HEK293 (cell line): ENCODE measurements at regions of chr1 and their contacts with region 1.

Region 1: GRCh38 chr1:214328770-214329469 is 48.0 kb downstream of the SMYD2 start:
- H3K4me3 ChIP-seq: no peak overlapping the region
- H3K27ac ChIP-seq: no peak overlapping the region
- H3K4me1 ChIP-seq: no peaks in the 10 kb centered on the region
- CTCF ChIP-seq: peak; percentile 90

Region 2: GRCh38 chr1:214219902-214220301 is 109.0 kb before region 1 on chr1:
- CTCF ChIA-PET with region 1: interaction called, 186 read pairs
- POLR2A ChIA-PET with region 1: no interaction called
- H3K4me3 ChIP-seq: no peak overlapping the region
- H3K27ac ChIP-seq: no peak overlapping the region
- H3K4me1 ChIP-seq: no peaks in the 10 kb centered on the region
- CTCF ChIP-seq: no peak

Region 3: DNA sequence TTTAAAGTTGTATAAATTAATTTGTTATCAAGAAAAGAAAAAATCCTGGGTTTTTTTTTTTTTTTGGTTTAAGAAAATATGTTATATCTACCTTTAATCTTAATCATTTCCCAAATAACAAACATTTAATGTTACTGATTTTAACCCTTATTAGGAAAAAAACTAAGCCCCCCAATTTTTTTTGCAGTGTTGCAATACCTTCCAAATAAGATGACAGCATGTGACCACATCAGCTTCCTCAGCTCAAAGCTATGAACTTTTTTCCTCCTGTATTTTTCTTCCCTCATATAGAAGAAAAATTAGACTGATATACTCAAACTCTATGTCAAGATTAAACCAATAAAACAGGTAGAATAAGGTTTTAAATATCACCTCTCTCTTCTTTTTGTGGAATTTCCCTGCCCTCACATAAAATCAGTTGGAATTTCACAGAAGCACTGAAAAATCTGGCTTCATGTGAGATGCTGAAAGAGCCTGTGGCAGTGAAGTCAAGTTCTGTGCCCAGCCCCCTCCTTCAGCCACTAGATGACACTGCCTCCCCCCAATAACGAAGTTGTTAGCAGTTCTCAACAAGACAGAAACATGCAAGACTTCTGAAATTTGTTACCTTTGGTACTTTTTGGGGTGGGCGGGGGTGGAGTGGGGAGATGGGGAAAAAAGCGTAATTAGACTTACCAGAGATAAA is 57.6 kb before region 1 on chr1:
- CTCF ChIA-PET with region 1: interaction called, 25 read pairs
- POLR2A ChIA-PET with region 1: no interaction called
- H3K4me3 ChIP-seq: no peak overlapping the region
- H3K27ac ChIP-seq: no peak overlapping the region
- H3K4me1 ChIP-seq: peaks cover 5% of the 10 kb centered on the region; the same call in 1 of the 2 replicates
- CTCF ChIP-seq: peak; percentile 53

Region 4: GRCh38 chr1:214316593-214316992 is 12.3 kb before region 1 on chr1:
- CTCF ChIA-PET with region 1: interaction called, 45 read pairs
- POLR2A ChIA-PET with region 1: no interaction called
- H3K4me3 ChIP-seq: no peak overlapping the region
- H3K27ac ChIP-seq: no peak overlapping the region
- H3K4me1 ChIP-seq: no peaks in the 10 kb centered on the region
- CTCF ChIP-seq: no peak

Region 5: DNA sequence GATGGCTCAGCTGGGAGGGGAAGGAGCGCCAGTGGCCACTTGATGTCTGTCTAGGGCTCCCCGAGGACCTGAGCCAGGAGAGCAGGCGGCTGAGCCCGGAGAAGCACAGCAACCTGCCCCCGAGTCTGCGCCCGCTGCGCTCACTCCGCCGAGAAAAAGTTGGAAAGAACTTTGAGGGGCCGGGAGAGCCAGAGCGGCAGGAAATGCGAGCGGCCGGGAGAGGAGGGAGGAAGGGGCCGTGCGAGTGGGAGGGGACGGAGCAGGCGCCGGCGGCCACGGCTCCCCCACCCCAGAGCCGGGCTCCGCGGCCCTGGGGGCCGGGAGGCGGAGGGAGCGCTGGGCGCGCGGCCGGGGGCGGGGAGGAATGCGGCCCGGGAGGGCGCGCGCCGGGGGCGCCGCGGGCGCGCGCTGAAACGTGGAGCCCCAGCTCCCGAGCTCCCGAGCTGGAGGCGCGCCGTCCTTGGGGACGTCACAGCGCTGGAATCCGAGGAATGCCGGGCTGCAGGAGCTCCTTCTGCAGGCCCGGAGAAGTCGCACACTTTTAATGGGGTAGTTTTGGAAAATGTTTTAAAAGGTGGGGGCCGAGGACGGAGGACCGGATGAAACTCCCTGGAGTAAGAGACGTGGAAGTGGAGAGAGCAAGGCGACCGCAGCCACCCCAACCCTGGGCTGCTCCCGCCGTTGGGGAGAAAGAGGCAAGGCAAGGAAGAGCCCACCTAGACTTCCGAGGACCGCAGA is 222.7 kb after region 1 on chr1 and contains the start of gene PTPN14:
- CTCF ChIA-PET with region 1: interaction called, 16 read pairs
- POLR2A ChIA-PET with region 1: no interaction called
- H3K4me3 ChIP-seq: peak within 1 kb of the TSS; percentile 94
- H3K27ac ChIP-seq: peak within 1 kb of the TSS; percentile 94
- H3K4me1 ChIP-seq: peaks cover 10% of the 10 kb centered on the region
- CTCF ChIP-seq: peak; percentile 62; the same call in 1 of the 2 replicates

Region 6: GRCh38 chr1:214632091-214632490 is 303.2 kb after region 1 on chr1:
- CTCF ChIA-PET with region 1: interaction called, 17 read pairs
- POLR2A ChIA-PET with region 1: no interaction called
- H3K4me3 ChIP-seq: no peak overlapping the region
- H3K27ac ChIP-seq: no peak overlapping the region
- H3K4me1 ChIP-seq: no peaks in the 10 kb centered on the region
- CTCF ChIP-seq: no peak